CD14-positive monocyte (primary cell): ENCODE measurements at regions of chr7 and their contacts with region 1.

Region 1: GRCh38 chr7:35801392-35802101 is 690 bp downstream of the SEPTIN7 start:
- DNase-seq: peak; percentile 62 to 77 (median 68)
- H3K4me3 ChIP-seq: peak overlapping the region; percentile 58 to 93 (median 93)
- H3K4me3 Mint-ChIP-seq: peak overlapping the region; percentile 92 to 97
- H3K27ac ChIP-seq: peak overlapping the region; percentile 76 to 98
- H3K27ac Mint-ChIP-seq: peak overlapping the region; percentile 97 to 99 (median 99)
- H3K4me1 ChIP-seq: peaks cover 21 to 27% of the 10 kb centered on the region in 2 donors
- H3K4me1 Mint-ChIP-seq: peaks cover 40% of the 10 kb centered on the region
- H3K27me3 ChIP-seq: no peaks in the 10 kb centered on the region
- H3K27me3 Mint-ChIP-seq: peaks cover 0 to 2% (median 2%) of the 10 kb centered on the region in 3 donors
- CTCF ChIP-seq: peak; percentile 39

Region 2: DNA sequence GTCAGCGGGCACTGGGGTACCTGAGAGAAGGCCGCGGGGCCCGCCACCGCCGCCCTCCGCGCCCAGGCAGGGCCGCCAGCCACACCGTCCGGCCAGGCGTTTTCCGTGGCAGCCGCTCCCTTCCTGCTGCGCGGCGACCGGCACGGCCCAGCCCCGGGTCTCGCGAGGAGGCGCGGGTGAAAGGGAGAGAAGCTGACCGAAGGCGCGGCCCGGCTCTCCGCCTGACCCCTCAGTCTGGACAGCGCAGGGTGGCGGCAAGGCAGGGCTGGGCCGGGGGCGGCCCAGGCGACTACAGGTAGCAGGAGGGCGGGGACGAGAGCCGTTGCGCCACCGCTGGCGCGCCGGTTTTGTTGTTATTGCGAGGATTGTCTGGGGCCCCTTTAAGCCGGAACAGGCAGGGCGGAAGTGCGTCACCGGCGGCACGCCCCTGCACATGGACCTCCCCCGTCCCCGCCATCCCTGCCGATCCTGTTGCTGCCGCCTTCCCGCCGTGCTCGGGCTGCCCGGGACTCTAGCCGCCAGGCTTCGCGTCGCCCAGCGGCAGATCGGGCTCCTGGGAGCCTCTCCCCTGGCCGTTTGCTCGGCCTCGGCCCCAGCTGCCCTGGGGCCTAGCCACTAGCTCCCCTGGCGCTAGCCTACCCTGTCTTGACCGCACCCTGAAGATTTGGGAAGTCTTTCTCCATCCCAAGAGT is 106.6 kb before region 1 on chr7 and contains the start of gene HERPUD2:
- intact Hi-C with region 1: loop called (anchors 5 kb)
- DNase-seq: peak; percentile 87 to 94 (median 91)
- H3K4me3 ChIP-seq: peak within 1 kb of the TSS; percentile 81 to 97 (median 96)
- H3K4me3 Mint-ChIP-seq: peak within 1 kb of the TSS; percentile 96 to 97
- H3K27ac ChIP-seq: peak within 1 kb of the TSS; percentile 80 to 99
- H3K27ac Mint-ChIP-seq: peak within 1 kb of the TSS; percentile 93 to 98 (median 97)
- H3K4me1 ChIP-seq: peaks cover 53 to 68% of the 10 kb centered on the region in 2 donors
- H3K4me1 Mint-ChIP-seq: peaks cover 65% of the 10 kb centered on the region
- H3K27me3 ChIP-seq: no peaks in the 10 kb centered on the region
- H3K27me3 Mint-ChIP-seq: peaks cover 0 to 2% (median 0%) of the 10 kb centered on the region in 3 donors
- CTCF ChIP-seq: no peak
- polyA plus RNA-seq, gene HERPUD2: 36.1 to 40.9 (median 36.4) TPM

Region 3: DNA sequence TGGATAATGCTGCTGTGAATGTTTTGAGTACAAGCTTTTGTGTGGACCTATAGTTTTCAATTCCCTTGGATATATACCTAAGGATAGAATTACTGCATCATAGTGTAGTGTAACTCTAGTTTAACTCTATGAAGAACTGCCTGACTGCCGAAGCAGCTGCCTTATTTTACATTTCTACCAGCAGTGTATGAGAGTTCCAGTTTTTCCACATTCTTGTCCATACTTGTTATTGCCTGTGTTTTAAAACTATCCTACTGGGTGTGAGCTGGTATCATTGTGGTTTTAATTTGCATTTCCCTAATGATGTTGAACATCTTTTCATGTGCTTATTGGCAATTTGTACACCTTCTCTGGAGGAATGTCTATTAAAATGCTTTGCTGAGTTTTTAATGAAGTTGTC is 15.0 kb after region 1 on chr7:
- intact Hi-C with region 1: no loop called
- DNase-seq: no peak
- H3K4me3 ChIP-seq: no peak overlapping the region
- H3K4me3 Mint-ChIP-seq: no peak overlapping the region
- H3K27ac ChIP-seq: no peak overlapping the region
- H3K27ac Mint-ChIP-seq: no peak overlapping the region
- H3K4me1 ChIP-seq: no peaks in the 10 kb centered on the region
- H3K4me1 Mint-ChIP-seq: peaks cover 33% of the 10 kb centered on the region
- H3K27me3 ChIP-seq: no peaks in the 10 kb centered on the region
- H3K27me3 Mint-ChIP-seq: peaks cover 0 to 3% (median 0%) of the 10 kb centered on the region in 3 donors
- CTCF ChIP-seq: no peak

Region 4: GRCh38 chr7:35854311-35854710 is 52.8 kb after region 1 on chr7:
- intact Hi-C with region 1: loop called in 1 of 2 experiments (anchors 10 kb)
- DNase-seq: no peak
- H3K4me3 ChIP-seq: no peak overlapping the region
- H3K4me3 Mint-ChIP-seq: no peak overlapping the region
- H3K27ac ChIP-seq: no peak overlapping the region
- H3K27ac Mint-ChIP-seq: no peak overlapping the region
- H3K4me1 ChIP-seq: no peaks in the 10 kb centered on the region
- H3K4me1 Mint-ChIP-seq: peaks cover 2% of the 10 kb centered on the region
- H3K27me3 ChIP-seq: no peaks in the 10 kb centered on the region
- H3K27me3 Mint-ChIP-seq: no peaks in the 10 kb centered on the region
- CTCF ChIP-seq: no peak

Region 5: GRCh38 chr7:35869810-35870209 is 68.3 kb after region 1 on chr7:
- intact Hi-C with region 1: no loop called
- DNase-seq: no peak
- H3K4me3 ChIP-seq: no peak overlapping the region
- H3K4me3 Mint-ChIP-seq: no peak overlapping the region
- H3K27ac ChIP-seq: peak overlapping the region in 1 of 2 donors; percentile 50
- H3K27ac Mint-ChIP-seq: no peak overlapping the region
- H3K4me1 ChIP-seq: peaks cover 2 to 8% of the 10 kb centered on the region in 2 donors
- H3K4me1 Mint-ChIP-seq: peaks cover 10% of the 10 kb centered on the region
- H3K27me3 ChIP-seq: no peaks in the 10 kb centered on the region
- H3K27me3 Mint-ChIP-seq: no peaks in the 10 kb centered on the region
- CTCF ChIP-seq: no peak

Region 6: GRCh38 chr7:35894721-35895120 is 93.2 kb after region 1 on chr7:
- intact Hi-C with region 1: loop called in 1 of 2 experiments (anchors 10 kb)
- DNase-seq: no peak
- H3K4me3 ChIP-seq: no peak overlapping the region
- H3K4me3 Mint-ChIP-seq: no peak overlapping the region
- H3K27ac ChIP-seq: no peak overlapping the region
- H3K27ac Mint-ChIP-seq: peak overlapping the region in 1 of 7 donors; percentile 47
- H3K4me1 ChIP-seq: no peaks in the 10 kb centered on the region
- H3K4me1 Mint-ChIP-seq: no peaks in the 10 kb centered on the region
- H3K27me3 ChIP-seq: no peaks in the 10 kb centered on the region
- H3K27me3 Mint-ChIP-seq: no peaks in the 10 kb centered on the region
- CTCF ChIP-seq: no peak